PC-3 (cell line): ENCODE measurements at regions of chrX and their contacts with region 1.

Region 1: DNA sequence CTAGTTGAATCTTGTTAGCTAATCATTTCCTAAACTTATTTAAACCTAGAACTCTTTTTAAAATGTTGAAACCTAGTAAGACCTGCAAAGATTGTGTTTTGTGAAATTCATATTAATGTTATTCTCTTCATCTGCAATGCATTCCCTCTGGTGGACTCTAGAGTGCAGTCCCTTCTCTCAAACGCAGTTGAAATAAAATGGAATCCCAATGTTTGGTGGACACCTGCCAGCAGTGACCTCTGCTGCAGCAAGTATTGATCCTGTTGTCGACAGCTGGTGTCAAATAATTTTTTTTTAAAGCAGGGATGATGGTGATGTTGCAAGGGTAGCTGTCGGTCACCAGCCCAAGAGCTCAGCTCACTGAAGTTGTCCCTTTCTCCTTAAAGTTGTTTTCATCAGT is 492.0 kb downstream of the ZIC3 start:
- DNase-seq: peak; percentile 46
- ATAC-seq: no peak
- H3K4me3 ChIP-seq: no peak overlapping the region
- H3K27ac ChIP-seq: no peak overlapping the region
- H3K4me1 ChIP-seq: 0 out of 2 replicates have a peak, but pooled peaks cover 4% of the 10 kb centered on the region
- H3K27me3 ChIP-seq: no peaks in the 10 kb centered on the region
- CTCF ChIP-seq: peak; percentile 55

Region 2: GRCh38 chrX:138128027-138128671 is 70.3 kb after region 1 on chrX:
- CTCF ChIA-PET with region 1: no interaction called
- POLR2A ChIA-PET with region 1: no interaction called
- intact Hi-C with region 1: loop called (anchors 2 kb)
- DNase-seq: peak; percentile 75
- ATAC-seq: peak; percentile 79
- H3K4me3 ChIP-seq: peak overlapping the region; percentile 46
- H3K27ac ChIP-seq: peak overlapping the region; percentile 89
- H3K4me1 ChIP-seq: peaks cover 20% of the 10 kb centered on the region
- H3K27me3 ChIP-seq: no peaks in the 10 kb centered on the region
- CTCF ChIP-seq: peak; percentile 72

Region 3: DNA sequence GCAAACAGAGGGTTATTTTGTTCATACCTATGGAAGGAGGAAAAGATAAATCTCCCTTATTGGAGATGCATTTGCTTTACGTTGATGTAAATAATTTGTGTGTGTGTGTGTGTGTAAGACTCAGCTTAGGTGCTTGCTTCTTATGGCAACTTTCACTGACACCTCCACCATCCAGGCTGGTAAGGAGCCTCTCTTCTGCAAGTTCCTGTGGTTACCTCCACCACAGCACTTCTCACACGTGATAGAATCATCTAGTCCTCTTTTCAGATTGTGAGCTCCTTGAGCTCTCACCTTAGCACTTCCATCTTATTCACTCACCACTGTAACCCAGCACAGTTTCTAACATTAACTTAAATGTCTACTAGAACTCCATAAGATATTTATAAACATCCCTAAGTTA is 100.0 kb after region 1 on chrX:
- CTCF ChIA-PET with region 1: no interaction called
- POLR2A ChIA-PET with region 1: no interaction called
- intact Hi-C with region 1: loop called (anchors 10 kb)
- DNase-seq: no peak
- ATAC-seq: no peak
- H3K4me3 ChIP-seq: no peak overlapping the region
- H3K27ac ChIP-seq: no peak overlapping the region
- H3K4me1 ChIP-seq: no peaks in the 10 kb centered on the region
- H3K27me3 ChIP-seq: no peaks in the 10 kb centered on the region
- CTCF ChIP-seq: no peak

Region 4: GRCh38 chrX:138191998-138192397 is 134.1 kb after region 1 on chrX:
- CTCF ChIA-PET with region 1: no interaction called
- POLR2A ChIA-PET with region 1: no interaction called
- intact Hi-C with region 1: loop called (anchors 5 kb)
- DNase-seq: peak; percentile 50
- ATAC-seq: peak; percentile 48; the same call in 1 of the 2 replicates
- H3K4me3 ChIP-seq: no peak overlapping the region
- H3K27ac ChIP-seq: no peak overlapping the region
- H3K4me1 ChIP-seq: no peaks in the 10 kb centered on the region
- H3K27me3 ChIP-seq: no peaks in the 10 kb centered on the region
- CTCF ChIP-seq: peak; percentile 77

Region 5: DNA sequence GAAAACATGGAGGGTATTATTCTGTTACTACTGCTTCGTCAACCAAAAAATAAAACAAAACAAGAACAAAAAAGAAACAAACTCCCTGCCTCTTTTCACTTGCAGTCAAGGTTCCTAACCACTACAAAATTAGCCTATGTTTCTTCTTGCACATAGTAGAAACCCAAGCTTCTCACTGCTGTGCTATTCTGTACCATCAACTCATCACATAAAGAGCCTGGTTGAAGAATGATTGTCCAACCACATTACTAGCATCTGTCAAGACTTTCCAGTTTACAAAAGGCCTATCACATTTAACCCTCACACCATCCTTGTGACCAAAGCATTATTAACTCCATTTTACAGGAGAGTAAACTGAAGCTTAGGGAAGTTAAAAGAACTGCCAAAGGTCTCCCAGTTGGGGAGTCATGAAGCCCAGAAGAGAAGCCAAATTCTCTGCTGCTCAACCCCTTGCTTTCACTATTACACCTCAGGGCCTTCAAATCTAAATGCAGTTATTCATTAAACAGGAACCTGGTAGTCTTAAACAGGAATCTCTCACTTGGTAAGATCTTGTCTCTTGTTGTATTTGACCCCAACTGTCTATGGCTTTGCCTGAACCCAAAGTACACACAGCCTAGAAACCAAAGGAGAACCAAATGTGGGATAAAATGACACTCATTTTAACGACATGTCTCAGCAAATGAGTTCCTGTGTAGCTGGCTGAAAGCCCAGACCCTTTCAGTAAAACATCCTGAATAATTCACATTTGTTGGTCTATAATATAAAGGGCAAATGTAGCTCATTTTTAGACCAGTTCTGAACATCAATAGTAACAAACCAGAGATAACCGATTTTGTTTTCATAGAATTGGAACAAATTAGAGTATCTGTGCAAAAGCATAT is 1481.3 kb after region 1 on chrX:
- CTCF ChIA-PET with region 1: no interaction called
- POLR2A ChIA-PET with region 1: no interaction called
- intact Hi-C with region 1: no loop called
- DNase-seq: peak; percentile 4
- ATAC-seq: no peak
- H3K4me3 ChIP-seq: no peak overlapping the region
- H3K27ac ChIP-seq: no peak overlapping the region
- H3K4me1 ChIP-seq: no peaks in the 10 kb centered on the region
- H3K27me3 ChIP-seq: peaks cover 37% of the 10 kb centered on the region
- CTCF ChIP-seq: no peak